Activated naive CD4-positive, alpha-beta T cell treated with anti-CD3 and anti-CD28 coated beads for 36 hours (primary cell): ENCODE measurements at regions of chr3 and their contacts with region 1.

Region 1: DNA sequence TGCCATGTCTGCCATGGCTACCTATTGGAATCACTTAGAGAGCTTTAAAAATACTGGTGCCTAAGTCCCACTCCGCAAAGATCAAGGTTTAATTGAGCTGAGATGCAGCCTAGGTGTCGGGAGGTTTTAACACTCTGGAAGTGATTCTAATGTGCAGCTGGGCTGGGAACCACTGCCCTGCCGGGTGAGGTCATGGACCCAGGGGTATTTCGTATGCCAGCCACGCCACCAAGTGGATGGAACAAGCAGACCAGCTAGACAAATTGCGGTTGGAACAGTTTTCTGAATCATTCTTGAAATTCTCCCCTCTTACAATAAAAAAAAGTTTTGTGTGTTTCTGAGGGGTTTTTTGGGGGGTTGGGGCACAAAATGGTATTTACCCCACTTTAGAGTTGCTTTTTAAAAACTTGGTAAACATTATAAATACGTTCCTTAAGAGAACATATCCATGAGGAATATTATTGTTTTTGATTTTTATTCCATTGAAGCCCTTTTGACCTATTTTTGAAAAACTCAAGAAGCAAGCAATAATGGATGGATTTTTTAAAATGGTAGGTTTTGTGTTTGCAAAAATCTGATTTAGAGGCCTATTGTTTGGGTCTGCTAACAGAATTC is 66.2 kb upstream of the CSTA start:
- DNase-seq: peak; percentile 85
- H3K4me3 Mint-ChIP-seq: no peak overlapping the region
- H3K27ac Mint-ChIP-seq: no peak overlapping the region
- H3K4me1 Mint-ChIP-seq: peaks cover 14% of the 10 kb centered on the region
- H3K27me3 Mint-ChIP-seq: peaks cover 10% of the 10 kb centered on the region

Region 2: GRCh38 chr3:121749276-121750086 is 509.4 kb before region 1 on chr3 and contains the start of gene GOLGB1:
- CTCF ChIA-PET with region 1: no interaction called
- intact Hi-C with region 1: loop called (anchors 10 kb)
- DNase-seq: peak; percentile 97
- H3K4me3 Mint-ChIP-seq: no peak within 1 kb of the TSS
- H3K27ac Mint-ChIP-seq: no peak within 1 kb of the TSS
- H3K4me1 Mint-ChIP-seq: peaks cover 5% of the 10 kb centered on the region
- H3K27me3 Mint-ChIP-seq: no peaks in the 10 kb centered on the region
- total RNA-seq, gene GOLGB1: 18.2 to 19.7 TPM

Region 3: DNA sequence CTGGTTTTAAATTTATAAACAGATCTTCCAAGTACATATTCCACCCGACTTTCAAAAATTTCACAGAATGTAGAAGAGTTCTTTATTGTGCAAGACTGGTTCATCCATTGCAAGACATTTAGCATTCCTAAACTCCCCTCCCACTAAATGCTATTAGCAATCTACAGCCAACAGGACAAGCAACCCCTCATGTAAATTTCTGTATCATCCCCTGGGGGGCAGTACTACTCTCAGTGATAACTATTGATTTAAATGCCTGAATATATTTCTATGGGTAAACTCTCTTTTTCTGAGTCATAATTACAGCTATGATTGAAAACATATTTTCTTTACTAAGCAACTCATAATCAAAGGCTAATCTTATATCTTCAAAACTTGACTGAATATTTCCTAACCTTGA is 375.4 kb before region 1 on chr3:
- CTCF ChIA-PET with region 1: interaction called, 3 read pairs
- intact Hi-C with region 1: loop called (anchors 1 kb)
- DNase-seq: no peak
- H3K4me3 Mint-ChIP-seq: no peak overlapping the region
- H3K27ac Mint-ChIP-seq: no peak overlapping the region
- H3K4me1 Mint-ChIP-seq: no peaks in the 10 kb centered on the region
- H3K27me3 Mint-ChIP-seq: no peaks in the 10 kb centered on the region

Region 4: DNA sequence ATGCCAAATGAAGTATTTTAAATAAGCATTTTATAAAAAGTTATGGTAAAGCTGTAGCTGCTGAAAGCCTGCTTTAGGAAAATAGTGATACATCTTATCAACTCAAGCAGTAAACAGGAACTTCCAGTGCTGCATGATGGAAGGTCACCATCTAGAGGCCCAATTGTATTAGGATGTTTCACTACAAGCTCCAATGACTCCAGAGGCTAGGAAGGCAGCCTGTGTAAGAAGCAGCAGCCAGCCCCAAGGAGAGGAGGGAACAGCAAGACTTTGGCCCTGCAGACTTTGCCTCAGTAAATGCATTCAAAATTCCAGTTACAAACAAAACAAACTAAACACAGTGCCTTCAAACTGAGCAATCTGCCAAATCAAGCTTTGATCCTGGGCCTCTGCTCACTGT is 268.9 kb before region 1 on chr3:
- CTCF ChIA-PET with region 1: no interaction called
- intact Hi-C with region 1: no loop called
- DNase-seq: no peak
- H3K4me3 Mint-ChIP-seq: no peak overlapping the region
- H3K27ac Mint-ChIP-seq: no peak overlapping the region
- H3K4me1 Mint-ChIP-seq: no peaks in the 10 kb centered on the region
- H3K27me3 Mint-ChIP-seq: peaks cover 2% of the 10 kb centered on the region

Region 5: GRCh38 chr3:122245513-122246174 is 13.2 kb before region 1 on chr3:
- CTCF ChIA-PET with region 1: interaction called, 8 read pairs
- intact Hi-C with region 1: loop called (anchors 1 kb)
- DNase-seq: no peak
- H3K4me3 Mint-ChIP-seq: peak overlapping the region; percentile 47
- H3K27ac Mint-ChIP-seq: no peak overlapping the region
- H3K4me1 Mint-ChIP-seq: peaks cover 20% of the 10 kb centered on the region
- H3K27me3 Mint-ChIP-seq: peaks cover 7% of the 10 kb centered on the region

Region 6: GRCh38 chr3:122299872-122300460 is 41.1 kb after region 1 on chr3:
- CTCF ChIA-PET with region 1: interaction called, 3 read pairs
- intact Hi-C with region 1: loop called (anchors 1 kb)
- DNase-seq: peak; percentile 64
- H3K4me3 Mint-ChIP-seq: no peak overlapping the region
- H3K27ac Mint-ChIP-seq: no peak overlapping the region
- H3K4me1 Mint-ChIP-seq: peaks cover 16% of the 10 kb centered on the region
- H3K27me3 Mint-ChIP-seq: peaks cover 1% of the 10 kb centered on the region